CD4-positive, alpha-beta T cell (primary cell): ENCODE measurements at regions of chr13 and their contacts with region 1.

Region 1: GRCh38 chr13:38366954-38367645 is 17.4 kb downstream of the UFM1 start:
- DNase-seq: no peak
- ATAC-seq: no peak
- H3K4me3 ChIP-seq: no peak overlapping the region
- H3K4me3 Mint-ChIP-seq: no peak overlapping the region
- H3K27ac ChIP-seq: no peak overlapping the region
- H3K27ac Mint-ChIP-seq: no peak overlapping the region
- H3K4me1 ChIP-seq: no peaks in the 10 kb centered on the region
- H3K4me1 Mint-ChIP-seq: no peaks in the 10 kb centered on the region
- H3K27me3 ChIP-seq: no peaks in the 10 kb centered on the region
- H3K27me3 Mint-ChIP-seq: peaks cover 8% of the 10 kb centered on the region
- CTCF ChIP-seq: no peak

Region 2: DNA sequence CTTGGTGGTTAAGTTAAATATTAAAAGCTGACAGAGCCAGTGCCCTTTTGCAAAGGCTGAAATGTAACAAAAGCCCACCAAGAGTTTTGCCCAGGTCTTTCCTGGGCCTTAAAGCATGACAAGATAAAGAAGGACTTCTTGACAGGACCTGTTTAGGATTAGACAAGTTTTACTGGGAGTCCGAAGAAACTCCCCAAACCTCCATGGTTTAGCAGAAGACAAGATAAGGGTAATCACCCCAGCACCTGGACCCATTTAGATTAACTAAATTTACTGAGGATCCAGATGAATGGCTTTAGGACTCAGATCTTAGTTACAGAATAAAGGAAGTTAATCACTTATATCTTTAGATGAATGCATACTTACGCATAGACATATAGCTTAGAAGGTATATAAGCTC is 32.3 kb before region 1 on chr13:
- CTCF ChIA-PET with region 1: no interaction called
- POLR2A ChIA-PET with region 1: no interaction called
- intact Hi-C with region 1: loop called in 1 of 2 experiments (anchors 5 kb)
- DNase-seq: no peak
- ATAC-seq: no peak
- H3K4me3 ChIP-seq: no peak overlapping the region
- H3K4me3 Mint-ChIP-seq: no peak overlapping the region
- H3K27ac ChIP-seq: no peak overlapping the region
- H3K27ac Mint-ChIP-seq: no peak overlapping the region
- H3K4me1 ChIP-seq: no peaks in the 10 kb centered on the region
- H3K4me1 Mint-ChIP-seq: no peaks in the 10 kb centered on the region
- H3K27me3 ChIP-seq: no peaks in the 10 kb centered on the region
- H3K27me3 Mint-ChIP-seq: no peaks in the 10 kb centered on the region
- CTCF ChIP-seq: no peak

Region 3: GRCh38 chr13:38686577-38687245 is 319.6 kb after region 1 on chr13 and contains the start of gene FREM2:
- CTCF ChIA-PET with region 1: no interaction called
- POLR2A ChIA-PET with region 1: no interaction called
- intact Hi-C with region 1: no loop called
- DNase-seq: no peak
- ATAC-seq: no peak
- H3K4me3 ChIP-seq: no peak within 1 kb of the TSS
- H3K4me3 Mint-ChIP-seq: no peak within 1 kb of the TSS
- H3K27ac ChIP-seq: no peak within 1 kb of the TSS
- H3K27ac Mint-ChIP-seq: no peak within 1 kb of the TSS
- H3K4me1 ChIP-seq: no peaks in the 10 kb centered on the region
- H3K4me1 Mint-ChIP-seq: no peaks in the 10 kb centered on the region
- H3K27me3 ChIP-seq: peaks cover 20 to 22% of the 10 kb centered on the region in 2 experiments
- H3K27me3 Mint-ChIP-seq: peaks cover 27% of the 10 kb centered on the region
- CTCF ChIP-seq: no peak
- total RNA-seq, gene FREM2: not detected